ENCODE measurements at regions of chrX and their contacts with region 1.

Region 1: DNA sequence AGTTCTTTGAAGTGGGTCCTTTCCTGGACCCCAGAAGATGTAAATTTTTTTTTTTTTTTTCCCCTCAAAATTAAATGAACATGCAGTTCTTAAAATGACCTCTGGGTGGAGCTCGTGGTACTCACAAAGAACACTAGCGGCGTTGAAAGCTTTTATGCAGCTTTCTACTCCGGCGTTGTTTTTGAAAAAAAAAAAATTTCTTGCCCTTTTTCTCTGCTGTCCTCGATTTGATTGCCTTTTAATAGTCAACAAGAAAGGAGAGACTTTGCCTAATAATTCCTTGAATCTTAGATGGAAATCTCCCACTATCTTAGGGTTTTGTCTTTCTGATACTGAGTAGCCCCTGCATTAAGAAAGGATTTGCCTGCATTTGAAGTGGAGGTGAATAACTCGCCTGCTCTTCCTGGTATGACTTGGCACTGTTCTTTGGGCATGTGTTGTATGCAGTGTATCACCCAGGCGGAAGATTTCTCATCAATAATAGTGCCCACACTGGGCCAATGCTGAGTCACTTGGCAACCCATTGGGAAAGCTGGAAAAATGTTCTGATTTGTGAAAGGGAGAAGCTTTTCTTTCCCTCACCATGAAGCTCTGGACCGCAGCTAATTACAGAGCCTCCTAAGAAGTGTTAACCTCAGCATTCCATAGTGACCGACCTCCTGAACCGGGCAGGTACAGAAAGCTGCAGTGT is 104.0 kb downstream of the PHEX start:
- DNase-seq: no peak
- ATAC-seq: peak; percentile 75
- H3K4me3 ChIP-seq: peak overlapping the region in 1 of 2 donors; percentile 18
- H3K27ac ChIP-seq: no peak overlapping the region
- H3K4me1 ChIP-seq: no peaks in the 10 kb centered on the region
- H3K27me3 ChIP-seq: no peaks in the 10 kb centered on the region

Region 2: DNA sequence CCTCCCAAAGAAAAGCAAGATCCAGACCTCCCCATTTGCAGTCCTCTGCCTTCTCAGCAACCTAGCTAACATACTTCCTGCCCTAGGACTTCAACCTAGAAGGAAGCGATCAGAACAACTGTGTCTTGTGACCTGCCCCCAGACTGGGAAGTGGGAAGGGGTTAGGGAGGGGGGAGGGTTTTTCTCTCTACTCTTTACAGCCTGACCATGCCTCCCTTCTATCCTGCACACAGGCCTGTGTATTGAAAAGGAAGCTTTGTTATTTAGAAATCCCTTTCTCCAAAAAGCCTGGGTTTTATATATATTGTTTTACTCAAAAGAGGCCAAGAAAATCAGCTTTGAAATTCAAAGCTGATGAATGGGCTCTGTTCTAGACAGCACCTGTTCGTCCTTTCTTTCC is 230.9 kb before region 1 on chrX:
- intact Hi-C with region 1: no loop called
- DNase-seq: no peak
- ATAC-seq: no peak
- H3K4me3 ChIP-seq: no peak overlapping the region
- H3K27ac ChIP-seq: no peak overlapping the region
- H3K4me1 ChIP-seq: no peaks in the 10 kb centered on the region
- H3K27me3 ChIP-seq: no peaks in the 10 kb centered on the region

Region 3: DNA sequence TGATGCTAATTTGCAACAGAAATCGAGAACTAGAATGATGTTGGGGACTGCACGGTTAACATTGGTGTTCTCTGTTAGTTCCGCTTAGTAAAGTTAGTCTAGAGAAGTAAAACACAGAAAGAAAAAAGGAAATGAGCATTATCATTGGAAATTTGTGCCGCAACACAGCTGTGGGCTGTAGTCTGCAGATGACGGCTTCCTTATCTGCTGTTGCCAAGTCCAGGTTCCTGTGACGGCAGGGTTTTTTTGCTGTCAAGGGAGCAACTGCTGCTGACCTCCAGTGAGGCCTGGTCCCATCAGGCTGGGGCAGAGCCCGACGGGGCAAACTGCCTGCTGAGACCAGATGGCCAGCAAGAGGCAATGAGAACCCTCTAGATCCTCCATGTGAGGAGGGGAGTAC is 142.9 kb before region 1 on chrX:
- intact Hi-C with region 1: loop called in 1 of 2 experiments (anchors 10 kb)
- DNase-seq: peak in 1 of 2 donors; percentile 71
- ATAC-seq: no peak
- H3K4me3 ChIP-seq: no peak overlapping the region
- H3K27ac ChIP-seq: no peak overlapping the region
- H3K4me1 ChIP-seq: no peaks in the 10 kb centered on the region
- H3K27me3 ChIP-seq: no peaks in the 10 kb centered on the region

Region 4: DNA sequence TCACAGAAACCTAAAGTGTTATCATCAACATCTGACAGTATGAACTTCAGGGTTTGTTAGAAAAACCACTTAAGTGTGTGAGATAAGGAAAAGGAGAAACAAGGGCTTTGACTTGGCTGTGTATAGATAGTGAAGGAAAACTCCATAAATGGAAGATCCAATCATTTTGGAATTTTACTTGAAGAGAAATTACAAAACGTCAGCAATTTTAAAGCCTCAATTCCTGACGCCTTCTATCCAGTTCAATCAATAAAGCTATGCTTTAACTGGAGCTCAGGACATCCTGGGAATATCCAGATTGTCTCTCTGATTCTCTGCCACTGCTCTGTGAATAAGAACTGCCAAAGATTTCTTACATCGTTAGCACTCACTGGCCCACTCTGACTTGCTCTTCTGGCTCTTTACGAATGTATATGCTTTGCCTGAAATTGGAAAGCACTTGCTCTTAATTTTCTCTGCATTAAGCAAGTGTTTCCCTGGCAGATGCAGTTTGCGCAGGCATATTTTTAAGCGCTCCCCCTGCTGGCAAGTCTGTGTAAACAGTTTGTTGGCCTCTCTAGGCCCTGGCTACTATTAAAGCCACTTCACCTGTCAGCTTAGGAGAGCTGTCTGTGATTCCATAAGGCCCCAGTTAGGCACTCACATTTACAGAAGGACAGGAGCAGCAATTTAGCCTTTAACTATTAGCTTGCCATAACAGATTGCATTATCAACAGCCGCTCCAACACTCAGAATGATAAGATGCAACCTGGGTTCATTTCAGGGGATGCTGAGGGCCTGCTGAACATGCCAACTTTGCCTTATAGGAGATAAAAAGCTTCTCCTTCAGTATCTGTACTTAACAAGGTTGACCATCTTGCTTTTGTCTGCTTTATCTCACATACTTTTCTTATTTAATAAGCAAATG is 612.2 kb after region 1 on chrX:
- intact Hi-C with region 1: loop called (anchors 2 to 5 kb)
- DNase-seq: peak in 1 of 2 donors; percentile 50
- ATAC-seq: peak; percentile 66
- H3K4me3 ChIP-seq: no peak overlapping the region
- H3K27ac ChIP-seq: no peak overlapping the region
- H3K4me1 ChIP-seq: no peaks in the 10 kb centered on the region
- H3K27me3 ChIP-seq: no peaks in the 10 kb centered on the region

Measured in aorta (tissue), 5 donors.